B cell (primary cell): ENCODE measurements at regions of chr4 and their contacts with region 1.

Region 1: GRCh38 chr4:16205298-16206164 is 20.7 kb downstream of the TAPT1 start:
- DNase-seq: peak; percentile 78
- ATAC-seq: peak; percentile 72
- H3K4me3 ChIP-seq: no peak overlapping the region
- H3K4me3 Mint-ChIP-seq: peak overlapping the region; percentile 54
- H3K27ac ChIP-seq: no peak overlapping the region
- H3K27ac Mint-ChIP-seq: peak overlapping the region; percentile 76
- H3K4me1 ChIP-seq: peaks cover 19 to 25% of the 10 kb centered on the region in 2 donors
- H3K4me1 Mint-ChIP-seq: peaks cover 42% of the 10 kb centered on the region
- H3K27me3 ChIP-seq: no peaks in the 10 kb centered on the region
- H3K27me3 Mint-ChIP-seq: no peaks in the 10 kb centered on the region
- CTCF ChIP-seq: peak; percentile 86

Region 2: DNA sequence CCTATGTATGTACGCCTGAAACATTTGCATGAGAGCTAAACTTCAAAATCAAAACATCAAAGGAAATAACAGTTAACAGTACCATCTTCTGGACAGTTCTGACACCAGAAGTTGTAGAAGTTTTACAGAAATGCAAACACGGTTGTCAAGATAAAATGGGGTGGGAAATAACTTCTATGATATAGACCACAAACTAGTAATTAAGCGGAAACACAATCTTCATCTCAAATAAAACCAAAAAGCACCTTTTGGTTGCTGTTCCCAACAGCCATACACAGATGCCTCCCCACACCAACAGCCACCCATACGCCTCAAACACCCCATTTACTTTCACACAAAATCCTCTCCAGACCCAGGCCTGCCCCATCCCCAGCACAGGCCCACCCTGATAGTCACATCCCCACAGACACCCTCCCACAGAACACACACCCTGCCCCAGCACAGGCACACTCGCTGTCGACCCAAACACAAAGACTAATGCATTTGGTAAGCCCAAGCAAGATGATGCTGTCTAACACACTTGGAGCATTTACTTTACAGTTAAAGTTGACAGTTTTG is 43.6 kb before region 1 on chr4:
- CTCF ChIA-PET with region 1: no interaction called
- POLR2A ChIA-PET with region 1: no interaction called
- intact Hi-C with region 1: no loop called
- DNase-seq: no peak
- ATAC-seq: no peak
- H3K4me3 ChIP-seq: no peak overlapping the region
- H3K4me3 Mint-ChIP-seq: no peak overlapping the region
- H3K27ac ChIP-seq: no peak overlapping the region
- H3K27ac Mint-ChIP-seq: peak overlapping the region; percentile 5
- H3K4me1 ChIP-seq: no peaks in the 10 kb centered on the region
- H3K4me1 Mint-ChIP-seq: no peaks in the 10 kb centered on the region
- H3K27me3 ChIP-seq: no peaks in the 10 kb centered on the region
- H3K27me3 Mint-ChIP-seq: no peaks in the 10 kb centered on the region
- CTCF ChIP-seq: no peak

Region 3: GRCh38 chr4:16183604-16184003 is 21.9 kb before region 1 on chr4:
- CTCF ChIA-PET with region 1: interaction called, 13 read pairs
- POLR2A ChIA-PET with region 1: interaction called, 3 read pairs
- intact Hi-C with region 1: no loop called
- DNase-seq: no peak
- ATAC-seq: no peak
- H3K4me3 ChIP-seq: no peak overlapping the region
- H3K4me3 Mint-ChIP-seq: no peak overlapping the region
- H3K27ac ChIP-seq: peak overlapping the region in 1 of 2 donors; percentile 37
- H3K27ac Mint-ChIP-seq: no peak overlapping the region
- H3K4me1 ChIP-seq: peaks cover 0 to 12% of the 10 kb centered on the region in 2 donors
- H3K4me1 Mint-ChIP-seq: peaks cover 12% of the 10 kb centered on the region
- H3K27me3 ChIP-seq: no peaks in the 10 kb centered on the region
- H3K27me3 Mint-ChIP-seq: no peaks in the 10 kb centered on the region
- CTCF ChIP-seq: no peak

Region 4: GRCh38 chr4:16217300-16218051 is 11.9 kb after region 1 on chr4:
- CTCF ChIA-PET with region 1: interaction called, 16 read pairs
- POLR2A ChIA-PET with region 1: no interaction called
- intact Hi-C with region 1: loop called (anchors 2 kb)
- DNase-seq: no peak
- ATAC-seq: no peak
- H3K4me3 ChIP-seq: no peak overlapping the region
- H3K4me3 Mint-ChIP-seq: peak overlapping the region; percentile 8
- H3K27ac ChIP-seq: peak overlapping the region in 1 of 2 donors; percentile 51
- H3K27ac Mint-ChIP-seq: peak overlapping the region; percentile 7
- H3K4me1 ChIP-seq: peaks cover 25 to 31% of the 10 kb centered on the region in 2 donors
- H3K4me1 Mint-ChIP-seq: peaks cover 50% of the 10 kb centered on the region
- H3K27me3 ChIP-seq: no peaks in the 10 kb centered on the region
- H3K27me3 Mint-ChIP-seq: no peaks in the 10 kb centered on the region
- CTCF ChIP-seq: no peak

Region 5: DNA sequence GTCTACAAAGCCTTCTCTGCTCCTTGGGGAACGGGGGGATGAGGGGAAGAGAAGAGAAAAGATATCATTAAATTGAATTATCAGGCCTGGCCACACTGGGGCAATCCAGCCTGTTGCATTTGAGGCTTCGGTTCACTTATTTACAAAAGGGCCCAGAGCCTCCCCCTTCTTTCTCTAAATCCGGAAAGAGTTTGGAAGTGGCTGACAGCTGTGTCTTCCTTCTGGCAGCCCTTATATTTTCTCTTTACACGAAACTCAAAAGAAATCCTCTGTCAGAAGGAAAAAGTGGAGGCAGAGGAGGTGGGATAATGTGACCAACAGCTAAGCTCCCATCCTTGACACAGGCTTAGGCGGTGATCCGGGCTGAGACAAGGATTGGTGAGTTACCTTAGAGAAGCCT is 179.0 kb after region 1 on chr4:
- CTCF ChIA-PET with region 1: no interaction called
- POLR2A ChIA-PET with region 1: no interaction called
- intact Hi-C with region 1: no loop called
- DNase-seq: no peak
- ATAC-seq: no peak
- H3K4me3 ChIP-seq: no peak overlapping the region
- H3K4me3 Mint-ChIP-seq: no peak overlapping the region
- H3K27ac ChIP-seq: no peak overlapping the region
- H3K27ac Mint-ChIP-seq: no peak overlapping the region
- H3K4me1 ChIP-seq: no peaks in the 10 kb centered on the region
- H3K4me1 Mint-ChIP-seq: no peaks in the 10 kb centered on the region
- H3K27me3 ChIP-seq: no peaks in the 10 kb centered on the region
- H3K27me3 Mint-ChIP-seq: peaks cover 4% of the 10 kb centered on the region
- CTCF ChIP-seq: no peak